ENCODE measurements at regions of chr2 and their contacts with region 1.

Region 1: DNA sequence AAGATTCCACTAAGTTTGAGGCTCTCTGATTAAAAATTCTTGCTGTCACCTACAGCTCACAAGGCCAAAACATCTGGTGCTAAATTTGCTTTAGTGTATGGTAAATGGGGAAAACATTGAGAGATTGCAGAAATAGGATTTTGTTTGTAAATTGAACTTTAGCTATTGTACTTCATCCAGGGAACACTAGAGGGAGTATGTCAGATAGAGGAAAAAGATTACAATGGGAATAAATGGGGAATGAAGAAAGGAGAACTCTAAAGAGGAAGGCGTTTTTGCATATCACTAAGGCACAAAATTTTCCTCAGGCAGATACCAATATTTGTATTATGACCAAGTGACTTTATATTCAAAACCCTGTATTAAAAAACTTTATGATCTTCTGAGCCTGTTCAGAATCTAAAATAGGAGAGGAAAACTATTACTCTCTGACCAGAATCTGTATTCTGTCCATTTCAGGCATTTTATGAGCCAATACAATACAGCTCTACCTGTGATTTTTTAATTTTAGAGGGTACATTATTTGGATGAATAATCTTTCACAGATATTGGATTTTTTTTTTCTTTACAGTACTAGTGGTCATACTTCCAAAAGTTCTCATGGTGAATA is 52.3 kb upstream of the ITGB6 start:
- DNase-seq: peak; percentile 58
- H3K4me3 ChIP-seq: no peak overlapping the region
- H3K27ac ChIP-seq: no peak overlapping the region
- H3K4me1 ChIP-seq: no peaks in the 10 kb centered on the region
- H3K27me3 ChIP-seq: no peaks in the 10 kb centered on the region
- CTCF ChIP-seq: peak; percentile 52 to 57
- POLR2A ChIP-seq: no peak

Region 2: DNA sequence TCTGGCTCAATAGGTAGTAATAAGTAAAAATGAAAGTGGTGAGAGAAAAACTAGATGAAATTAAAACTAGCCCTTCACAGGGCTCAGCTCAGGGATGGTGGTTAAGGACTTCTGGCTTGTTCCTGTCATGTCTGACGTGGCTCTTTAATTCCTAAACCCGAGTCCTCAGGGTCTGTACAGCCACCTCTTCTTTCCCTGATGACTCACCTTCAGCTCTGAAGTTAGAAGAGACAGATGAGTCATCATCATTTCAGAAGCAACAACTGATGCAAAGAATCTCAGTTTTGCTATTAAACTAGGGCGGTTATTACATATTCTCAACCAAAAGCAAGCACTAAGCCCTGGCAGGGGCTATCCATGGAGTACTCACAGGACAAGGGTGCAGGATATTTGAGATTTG is 28.3 kb before region 1 on chr2:
- CTCF ChIA-PET with region 1: interaction called, 44 read pairs
- POLR2A ChIA-PET with region 1: no interaction called
- dilution Hi-C with region 1: no loop called
- intact Hi-C with region 1: no loop called
- DNase-seq: peak; percentile 87
- H3K4me3 ChIP-seq: peak overlapping the region in 1 of 3 experiments; percentile 41
- H3K27ac ChIP-seq: peak overlapping the region; percentile 95
- H3K4me1 ChIP-seq: peaks cover 80% of the 10 kb centered on the region
- H3K27me3 ChIP-seq: no peaks in the 10 kb centered on the region
- CTCF ChIP-seq: no peak
- POLR2A ChIP-seq: no peak

Region 3: GRCh38 chr2:160241251-160242137 is 10.9 kb before region 1 on chr2:
- CTCF ChIA-PET with region 1: interaction called, 18 read pairs
- POLR2A ChIA-PET with region 1: no interaction called
- dilution Hi-C with region 1: no loop called
- intact Hi-C with region 1: no loop called
- DNase-seq: peak; percentile 95
- H3K4me3 ChIP-seq: no peak overlapping the region
- H3K27ac ChIP-seq: peak overlapping the region; percentile 82
- H3K4me1 ChIP-seq: peaks cover 33% of the 10 kb centered on the region
- H3K27me3 ChIP-seq: no peaks in the 10 kb centered on the region
- CTCF ChIP-seq: no peak
- POLR2A ChIP-seq: no peak

Region 4: DNA sequence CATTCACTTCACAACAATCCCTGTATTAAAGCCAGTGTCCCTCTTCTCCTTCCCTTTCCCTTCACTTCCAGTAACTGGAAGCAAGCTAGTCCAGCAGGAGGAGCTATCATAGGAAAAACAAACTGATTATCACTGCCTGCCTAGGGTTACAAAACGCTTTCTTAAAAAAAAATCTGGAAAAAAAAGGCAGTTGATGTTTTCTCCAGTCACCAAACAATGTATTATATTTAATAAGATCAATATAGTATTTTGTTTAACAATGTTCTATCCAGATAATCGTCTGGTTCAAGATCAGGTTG is 26.4 kb after region 1 on chr2:
- CTCF ChIA-PET with region 1: interaction called, 16 read pairs
- POLR2A ChIA-PET with region 1: no interaction called
- dilution Hi-C with region 1: no loop called
- intact Hi-C with region 1: no loop called
- DNase-seq: peak; percentile 58
- H3K4me3 ChIP-seq: no peak overlapping the region
- H3K27ac ChIP-seq: peak overlapping the region; percentile 80
- H3K4me1 ChIP-seq: peaks cover 44% of the 10 kb centered on the region
- H3K27me3 ChIP-seq: no peaks in the 10 kb centered on the region
- CTCF ChIP-seq: peak; percentile 29 to 50
- POLR2A ChIP-seq: peak; percentile 0

Region 5: GRCh38 chr2:160613466-160614153 is 361.2 kb after region 1 on chr2:
- CTCF ChIA-PET with region 1: no interaction called
- POLR2A ChIA-PET with region 1: no interaction called
- dilution Hi-C with region 1: no loop called
- intact Hi-C with region 1: no loop called
- DNase-seq: peak; percentile 34
- H3K4me3 ChIP-seq: no peak overlapping the region
- H3K27ac ChIP-seq: no peak overlapping the region
- H3K4me1 ChIP-seq: peaks cover 17% of the 10 kb centered on the region
- H3K27me3 ChIP-seq: no peaks in the 10 kb centered on the region
- CTCF ChIP-seq: no peak
- POLR2A ChIP-seq: no peak

Region 6: DNA sequence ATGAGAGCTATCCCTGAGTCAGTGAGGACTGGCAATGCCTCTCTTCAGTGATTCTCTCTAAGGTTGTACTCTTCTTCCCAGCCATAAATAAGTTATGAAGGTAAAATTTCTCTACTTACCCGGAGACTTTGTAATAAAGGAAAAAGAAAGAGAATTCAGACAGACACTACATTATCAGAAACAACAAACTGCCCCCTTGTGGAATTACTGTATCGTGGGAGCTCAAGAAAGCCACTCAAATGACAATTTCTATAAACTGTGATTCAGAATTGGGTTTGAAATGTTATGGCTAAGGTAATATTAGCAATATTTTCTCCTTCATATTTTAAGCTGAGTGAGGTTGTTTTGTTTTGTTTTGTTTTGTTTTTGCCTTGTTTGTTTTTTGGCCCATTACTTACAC is 752.0 kb after region 1 on chr2:
- CTCF ChIA-PET with region 1: interaction called, 11 read pairs
- POLR2A ChIA-PET with region 1: no interaction called
- dilution Hi-C with region 1: no loop called
- intact Hi-C with region 1: no loop called
- DNase-seq: peak; percentile 22
- H3K4me3 ChIP-seq: no peak overlapping the region
- H3K27ac ChIP-seq: no peak overlapping the region
- H3K4me1 ChIP-seq: no peaks in the 10 kb centered on the region
- H3K27me3 ChIP-seq: no peaks in the 10 kb centered on the region
- CTCF ChIP-seq: peak; percentile 21 to 31
- POLR2A ChIP-seq: no peak